ENCODE measurements at regions of chr15 and their contacts with region 1.

Region 1: GRCh38 chr15:38496151-38496550 is 42.2 kb downstream of the FAM98B start:
- DNase-seq: no peak
- H3K4me3 Mint-ChIP-seq: no peak overlapping the region
- H3K27ac Mint-ChIP-seq: no peak overlapping the region
- H3K4me1 Mint-ChIP-seq: no peaks in the 10 kb centered on the region
- H3K27me3 Mint-ChIP-seq: no peaks in the 10 kb centered on the region
- CTCF ChIP-seq: no peak

Region 2: GRCh38 chr15:38421069-38421690 is 75.0 kb before region 1 on chr15:
- CTCF ChIA-PET with region 1: interaction called, 15 read pairs
- intact Hi-C with region 1: no loop called
- DNase-seq: no peak
- H3K4me3 Mint-ChIP-seq: no peak overlapping the region
- H3K27ac Mint-ChIP-seq: no peak overlapping the region
- H3K4me1 Mint-ChIP-seq: no peaks in the 10 kb centered on the region
- H3K27me3 Mint-ChIP-seq: peaks cover 14% of the 10 kb centered on the region
- CTCF ChIP-seq: no peak

Measured in Calu3 (cell line).